Activated B cell treated with CpG ODN at 0.5 μM for 24 hours (primary cell): ENCODE measurements at regions of chr5 and their contacts with region 1.

Region 1: GRCh38 chr5:58498340-58498942 is 7.2 kb downstream of the GAPT start:
- DNase-seq: no peak
- ATAC-seq: no peak
- H3K4me3 Mint-ChIP-seq: peak overlapping the region; percentile 0
- H3K27ac Mint-ChIP-seq: peak overlapping the region; percentile 94
- H3K4me1 Mint-ChIP-seq: peaks cover 95% of the 10 kb centered on the region
- H3K27me3 Mint-ChIP-seq: no peaks in the 10 kb centered on the region
- CTCF ChIP-seq: no peak

Region 2: DNA sequence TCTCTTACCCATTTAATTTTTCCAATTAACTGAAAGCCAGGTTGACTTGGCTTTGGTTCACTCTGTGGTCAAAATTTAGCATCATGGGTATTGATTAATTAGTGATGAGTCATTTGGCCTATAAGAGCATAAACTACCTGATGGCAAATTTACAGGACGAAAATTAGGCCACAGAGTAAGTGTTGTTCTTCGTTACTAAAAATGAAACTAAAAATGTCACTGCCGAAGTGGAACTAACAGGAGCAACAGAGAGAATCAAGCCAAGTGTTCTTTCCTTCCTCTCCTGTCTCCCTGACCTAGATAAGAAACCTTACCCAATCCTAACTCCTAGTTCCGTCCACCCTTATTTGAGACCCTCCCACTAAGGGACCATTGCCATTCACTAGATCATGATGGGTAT is 261.3 kb after region 1 on chr5:
- CTCF ChIA-PET with region 1: no interaction called
- POLR2A ChIA-PET with region 1: no interaction called
- intact Hi-C with region 1: loop called (anchors 10 kb)
- DNase-seq: no peak
- ATAC-seq: peak; percentile 45
- H3K4me3 Mint-ChIP-seq: peak overlapping the region; percentile 77
- H3K27ac Mint-ChIP-seq: peak overlapping the region; percentile 50
- H3K4me1 Mint-ChIP-seq: peaks cover 21% of the 10 kb centered on the region
- H3K27me3 Mint-ChIP-seq: no peaks in the 10 kb centered on the region
- CTCF ChIP-seq: no peak